ENCODE measurements at regions of chr7 and their contacts with region 1.

Region 1: DNA sequence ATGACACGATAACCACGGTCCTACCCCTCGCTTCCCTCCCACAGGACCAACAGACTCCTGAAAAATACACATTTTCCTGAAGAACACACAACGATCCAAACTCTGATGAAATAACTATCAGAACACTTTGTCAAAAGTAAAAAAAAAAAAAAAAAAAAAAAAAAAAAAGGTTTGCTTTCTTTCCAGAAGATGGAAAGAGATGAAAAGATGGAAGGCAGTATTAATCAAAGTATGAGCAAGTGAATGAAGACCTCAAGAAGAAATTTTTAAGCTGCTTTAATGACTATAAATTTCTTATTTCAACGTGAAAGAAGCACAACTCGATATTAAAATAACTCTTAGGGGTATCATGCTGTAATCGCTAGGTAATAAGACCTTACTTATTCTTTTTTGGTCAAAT is 202.3 kb downstream of the CHCHD3 start:
- DNase-seq: no peak
- ATAC-seq: no peak
- H3K4me3 Mint-ChIP-seq: no peak overlapping the region
- H3K27ac Mint-ChIP-seq: no peak overlapping the region
- H3K4me1 Mint-ChIP-seq: peaks cover 52% of the 10 kb centered on the region
- H3K27me3 Mint-ChIP-seq: no peaks in the 10 kb centered on the region
- CTCF ChIP-seq: no peak

Region 2: GRCh38 chr7:132817949-132818348 is 61.6 kb before region 1 on chr7:
- CTCF ChIA-PET with region 1: no interaction called
- POLR2A ChIA-PET with region 1: interaction called, 12 read pairs
- DNase-seq: no peak
- ATAC-seq: no peak
- H3K4me3 Mint-ChIP-seq: no peak overlapping the region
- H3K27ac Mint-ChIP-seq: no peak overlapping the region
- H3K4me1 Mint-ChIP-seq: peaks cover 14% of the 10 kb centered on the region
- H3K27me3 Mint-ChIP-seq: no peaks in the 10 kb centered on the region
- CTCF ChIP-seq: no peak

Region 3: GRCh38 chr7:132856416-132856815 is 23.2 kb before region 1 on chr7:
- CTCF ChIA-PET with region 1: no interaction called
- POLR2A ChIA-PET with region 1: no interaction called
- DNase-seq: no peak
- ATAC-seq: no peak
- H3K4me3 Mint-ChIP-seq: no peak overlapping the region
- H3K27ac Mint-ChIP-seq: 0 out of 2 replicates have a peak overlapping the region, but pooled peaks have one; percentile 41
- H3K4me1 Mint-ChIP-seq: peaks cover 22% of the 10 kb centered on the region
- H3K27me3 Mint-ChIP-seq: no peaks in the 10 kb centered on the region
- CTCF ChIP-seq: no peak